Sigmoid colon (tissue), 7 donors: ENCODE measurements at regions of chr5 and their contacts with region 1.

Region 1: DNA sequence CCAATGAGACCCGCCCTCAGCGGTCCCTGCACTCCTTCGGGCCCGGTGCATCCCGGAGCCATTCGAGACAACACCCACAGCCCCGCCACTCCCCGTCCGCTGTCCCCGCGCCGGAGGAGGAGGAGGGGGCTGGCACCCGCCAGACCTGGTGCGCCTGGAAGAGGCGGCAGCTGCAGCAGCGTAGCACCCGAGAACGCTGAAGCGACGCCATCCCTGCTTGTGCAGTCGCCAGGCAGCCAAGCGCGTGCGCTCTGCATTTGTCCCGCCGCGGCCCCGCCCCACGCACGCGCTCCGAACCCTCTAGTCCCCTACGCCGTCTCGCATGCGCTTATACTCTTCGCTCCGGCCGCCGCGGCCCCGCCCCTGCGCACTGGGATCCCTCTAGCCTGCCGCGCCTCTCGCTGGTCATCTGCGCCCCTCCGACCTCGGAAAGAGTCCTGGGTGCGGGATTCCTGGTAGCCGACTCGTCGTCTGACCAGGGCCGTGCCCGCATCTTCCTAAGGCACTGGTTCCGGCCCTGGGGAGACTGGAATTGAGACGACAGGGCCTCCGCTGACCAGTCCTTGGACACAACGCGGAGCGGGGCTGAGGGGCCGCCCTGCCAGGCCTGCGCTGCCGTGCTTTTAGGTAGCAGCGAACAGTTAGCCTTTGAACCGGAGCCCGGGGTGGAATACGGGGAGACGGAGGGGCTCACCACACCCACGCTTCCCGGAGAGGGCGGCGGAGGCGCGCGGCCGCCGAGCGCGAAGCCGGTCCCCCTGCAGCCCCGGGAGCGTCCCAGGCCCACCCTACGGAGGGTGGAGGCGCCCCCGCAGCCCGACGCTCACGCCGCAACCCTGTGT is at the start of gene MRNIP:
- DNase-seq: peak; percentile 98
- H3K4me3 ChIP-seq: peak within 1 kb of the TSS; percentile 90 to 99 (median 94)
- H3K27ac ChIP-seq: peak within 1 kb of the TSS; percentile 90 to 95 (median 93)
- H3K4me1 ChIP-seq: peaks cover 0 to 25% (median 21%) of the 10 kb centered on the region in 4 donors
- H3K27me3 ChIP-seq: no peaks in the 10 kb centered on the region
- CTCF ChIP-seq: peak in 1 of 4 experiments; percentile 11
- EP300 ChIP-seq: no peak
- POLR2A ChIP-seq: peak; percentile 45 to 52
- total RNA-seq, gene MRNIP: 30.7 to 59.8 (median 34.5) TPM

Region 2: GRCh38 chr5:179763215-179763945 is 95.4 kb before region 1 on chr5:
- intact Hi-C with region 1: loop called (anchors 2 kb)
- DNase-seq: peak; percentile 82
- H3K4me3 ChIP-seq: no peak overlapping the region
- H3K27ac ChIP-seq: peak overlapping the region; percentile 52 to 78 (median 61)
- H3K4me1 ChIP-seq: peaks cover 0 to 82% (median 68%) of the 10 kb centered on the region in 4 donors
- H3K27me3 ChIP-seq: no peaks in the 10 kb centered on the region
- CTCF ChIP-seq: peak; percentile 69 to 86 (median 80)
- EP300 ChIP-seq: no peak
- POLR2A ChIP-seq: no peak

Region 3: GRCh38 chr5:179780362-179780761 is 78.4 kb before region 1 on chr5:
- intact Hi-C with region 1: no loop called
- DNase-seq: peak; percentile 65
- H3K4me3 ChIP-seq: no peak overlapping the region
- H3K27ac ChIP-seq: no peak overlapping the region
- H3K4me1 ChIP-seq: peaks cover 0 to 11% (median 10%) of the 10 kb centered on the region in 4 donors
- H3K27me3 ChIP-seq: no peaks in the 10 kb centered on the region
- CTCF ChIP-seq: no peak
- EP300 ChIP-seq: no peak
- POLR2A ChIP-seq: no peak

Region 4: GRCh38 chr5:179806250-179807222 is 52.3 kb before region 1 on chr5 and contains the start of gene MGAT4B:
- intact Hi-C with region 1: loop called (anchors 2 kb)
- DNase-seq: peak; percentile 86
- H3K4me3 ChIP-seq: peak within 1 kb of the TSS; percentile 84 to 98 (median 90)
- H3K27ac ChIP-seq: peak within 1 kb of the TSS; percentile 95 to 99 (median 98)
- H3K4me1 ChIP-seq: peaks cover 0 to 52% (median 48%) of the 10 kb centered on the region in 4 donors
- H3K27me3 ChIP-seq: no peaks in the 10 kb centered on the region
- CTCF ChIP-seq: no peak
- EP300 ChIP-seq: no peak
- POLR2A ChIP-seq: no peak
- total RNA-seq, gene MGAT4B: 27.8 to 56.8 (median 31.5) TPM

Region 5: DNA sequence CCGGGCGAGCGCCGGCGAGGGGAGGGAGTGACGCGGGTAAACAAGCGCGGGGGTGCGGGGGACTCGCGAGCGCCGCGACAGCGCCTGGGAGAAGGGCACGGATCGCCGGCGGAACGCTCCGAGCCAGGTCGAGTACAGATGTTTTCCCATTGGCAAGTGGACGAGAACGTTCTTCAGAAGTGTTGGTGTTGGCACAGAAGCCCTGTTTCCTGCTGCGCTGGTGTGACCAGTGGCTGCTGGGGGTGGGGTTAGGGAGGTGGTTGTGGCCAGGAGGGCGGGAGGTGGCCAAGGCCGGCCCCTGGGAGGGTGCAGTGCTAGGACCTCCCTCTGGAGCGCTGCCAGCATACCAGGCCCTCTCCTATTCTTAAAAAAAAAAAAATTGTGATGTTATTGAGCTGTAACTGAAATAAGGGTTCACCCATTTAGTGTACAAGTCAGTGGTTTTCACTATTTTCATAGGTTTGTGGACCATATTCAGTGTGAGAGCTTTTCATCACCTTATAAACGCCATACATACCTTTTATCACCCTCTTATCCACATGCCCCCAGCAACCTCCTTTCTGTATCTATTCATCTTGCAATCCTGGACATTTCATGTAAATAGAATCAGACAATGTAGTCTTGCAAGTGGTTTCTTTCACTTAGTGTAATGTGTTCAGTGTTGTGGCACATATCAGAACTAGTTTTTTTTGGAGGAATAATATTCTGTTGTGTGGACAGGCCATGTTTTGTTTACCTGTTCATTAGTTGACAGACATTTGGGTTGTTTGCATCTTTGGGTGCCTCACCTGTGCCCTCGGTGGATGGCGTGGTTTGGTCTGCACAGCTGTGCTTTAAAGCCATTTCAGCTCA is 37.0 kb before region 1 on chr5:
- intact Hi-C with region 1: loop called (anchors 5 kb)
- DNase-seq: peak; percentile 99
- H3K4me3 ChIP-seq: peak overlapping the region; percentile 68 to 99 (median 97)
- H3K27ac ChIP-seq: peak overlapping the region; percentile 97 to 100 (median 99)
- H3K4me1 ChIP-seq: peaks cover 0 to 86% (median 79%) of the 10 kb centered on the region in 4 donors
- H3K27me3 ChIP-seq: no peaks in the 10 kb centered on the region
- CTCF ChIP-seq: no peak
- EP300 ChIP-seq: no peak
- POLR2A ChIP-seq: peak; percentile 79 to 82

Region 6: DNA sequence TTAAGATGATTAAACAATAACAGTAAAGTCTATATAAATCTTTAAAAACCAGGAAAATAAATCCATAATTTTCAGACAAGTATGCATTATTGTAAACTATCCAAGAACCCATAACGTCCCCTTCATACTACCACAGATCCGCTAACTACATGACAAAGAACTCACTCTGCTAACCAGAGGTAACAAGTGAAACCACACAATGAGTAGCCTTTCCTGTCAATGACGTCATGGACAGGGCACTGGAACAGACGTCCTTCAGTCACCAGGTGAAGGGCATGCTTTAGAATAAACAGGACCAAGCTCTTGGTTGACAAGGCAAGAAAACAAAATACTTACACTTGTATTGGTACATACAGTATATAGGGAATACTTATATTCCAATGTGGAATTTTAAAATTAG is 167.5 kb after region 1 on chr5:
- intact Hi-C with region 1: no loop called
- DNase-seq: no peak
- H3K4me3 ChIP-seq: no peak overlapping the region
- H3K27ac ChIP-seq: no peak overlapping the region
- H3K4me1 ChIP-seq: peaks cover 0 to 18% (median 8%) of the 10 kb centered on the region in 4 donors
- H3K27me3 ChIP-seq: no peaks in the 10 kb centered on the region
- CTCF ChIP-seq: no peak
- EP300 ChIP-seq: no peak
- POLR2A ChIP-seq: no peak

Region 7: GRCh38 chr5:181133610-181134231 is 1274.9 kb after region 1 on chr5:
- intact Hi-C with region 1: no loop called
- DNase-seq: peak; percentile 79
- H3K4me3 ChIP-seq: no peak overlapping the region
- H3K27ac ChIP-seq: no peak overlapping the region
- H3K4me1 ChIP-seq: no peaks in the 10 kb centered on the region
- H3K27me3 ChIP-seq: peaks cover 0 to 47% (median 3%) of the 10 kb centered on the region in 3 donors
- CTCF ChIP-seq: no peak
- EP300 ChIP-seq: no peak
- POLR2A ChIP-seq: no peak